Right cardiac atrium (tissue), 5 donors: ENCODE measurements at regions of chr1 and their contacts with region 1.

Region 1: DNA sequence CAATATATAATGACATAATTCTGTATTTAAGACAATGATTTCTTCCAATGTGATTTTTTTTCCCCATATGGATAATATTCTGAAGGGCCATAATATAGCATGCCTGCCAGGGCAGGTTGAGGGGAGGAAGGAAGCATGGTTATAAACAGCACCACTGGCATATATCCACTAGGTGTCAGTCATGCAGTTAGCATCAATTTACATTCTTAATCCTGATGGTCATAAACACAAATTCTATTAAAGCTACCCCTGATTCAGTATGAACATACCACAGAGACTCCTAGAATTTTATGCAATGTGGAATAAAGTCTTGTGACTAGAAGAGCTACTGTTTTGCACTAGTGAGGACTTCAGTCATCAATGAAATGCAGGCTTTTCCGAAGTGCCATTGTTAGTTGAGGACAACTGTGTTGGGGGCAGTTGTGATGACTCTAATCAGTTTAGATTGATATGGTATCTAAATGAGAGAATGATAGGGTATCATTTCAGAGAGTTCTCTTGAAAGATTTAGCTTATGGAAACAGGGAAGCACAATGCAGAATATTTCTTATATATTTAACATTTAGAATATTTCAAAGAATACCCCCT is 342.7 kb upstream of the NR5A2 start:
- DNase-seq: peak in 1 of 3 donors; percentile 11
- ATAC-seq: peak; percentile 55 to 76
- H3K4me3 ChIP-seq: no peak overlapping the region
- H3K27ac ChIP-seq: no peak overlapping the region
- H3K4me1 ChIP-seq: no peaks in the 10 kb centered on the region
- H3K27me3 ChIP-seq: no peaks in the 10 kb centered on the region

Region 2: DNA sequence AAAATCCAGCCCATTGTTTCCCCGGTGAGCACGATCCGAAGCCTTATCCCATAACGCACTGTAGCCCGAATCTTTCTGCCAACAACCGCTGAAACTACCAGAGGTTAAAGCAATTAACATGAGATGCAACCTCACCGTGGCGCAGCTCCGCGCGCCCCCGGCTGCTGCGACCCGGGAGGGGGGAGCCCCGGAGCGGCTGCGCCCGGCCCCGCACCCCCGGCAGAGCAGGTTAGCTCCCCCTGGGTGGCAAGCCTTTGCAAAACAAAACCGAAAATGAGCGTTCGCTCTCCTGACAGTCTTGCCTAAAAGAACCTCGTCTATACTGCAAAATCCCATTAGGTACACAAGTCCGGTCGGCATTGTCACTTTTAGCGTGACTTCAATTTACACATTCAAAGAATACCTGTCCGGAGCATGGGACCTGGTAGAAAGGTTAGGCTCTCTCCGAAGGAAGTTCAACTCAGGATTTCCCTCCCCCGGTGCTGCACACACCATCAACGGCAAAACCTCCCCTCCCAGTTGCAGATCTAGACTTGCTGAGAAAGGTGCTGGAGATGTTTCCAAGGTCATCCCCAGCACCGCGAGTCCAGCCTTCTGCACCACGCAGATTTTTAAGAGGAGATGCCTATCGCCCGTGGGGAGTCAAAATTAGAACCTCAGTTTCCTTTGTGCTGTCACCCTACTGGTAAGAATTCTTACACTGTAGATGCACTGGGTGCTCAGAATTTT is 617.6 kb after region 1 on chr1:
- intact Hi-C with region 1: loop called in 2 of 4 experiments (anchors 10 kb)
- DNase-seq: peak in 1 of 3 donors; percentile 44
- ATAC-seq: peak; percentile 71 to 85
- H3K4me3 ChIP-seq: peak overlapping the region; percentile 79
- H3K27ac ChIP-seq: no peak overlapping the region
- H3K4me1 ChIP-seq: no peaks in the 10 kb centered on the region
- H3K27me3 ChIP-seq: no peaks in the 10 kb centered on the region

Region 3: GRCh38 chr1:200488375-200489165 is 803.8 kb after region 1 on chr1:
- intact Hi-C with region 1: loop called (anchors 5 to 10 kb)
- DNase-seq: no peak
- ATAC-seq: peak; percentile 33 to 66
- H3K4me3 ChIP-seq: no peak overlapping the region
- H3K27ac ChIP-seq: no peak overlapping the region
- H3K4me1 ChIP-seq: no peaks in the 10 kb centered on the region
- H3K27me3 ChIP-seq: no peaks in the 10 kb centered on the region